Activated CD4-positive, alpha-beta T cell treated with anti-CD3 and anti-CD28 coated beads for 36 hours (primary cell): ENCODE measurements at regions of chr13 and their contacts with region 1.

Region 1: DNA sequence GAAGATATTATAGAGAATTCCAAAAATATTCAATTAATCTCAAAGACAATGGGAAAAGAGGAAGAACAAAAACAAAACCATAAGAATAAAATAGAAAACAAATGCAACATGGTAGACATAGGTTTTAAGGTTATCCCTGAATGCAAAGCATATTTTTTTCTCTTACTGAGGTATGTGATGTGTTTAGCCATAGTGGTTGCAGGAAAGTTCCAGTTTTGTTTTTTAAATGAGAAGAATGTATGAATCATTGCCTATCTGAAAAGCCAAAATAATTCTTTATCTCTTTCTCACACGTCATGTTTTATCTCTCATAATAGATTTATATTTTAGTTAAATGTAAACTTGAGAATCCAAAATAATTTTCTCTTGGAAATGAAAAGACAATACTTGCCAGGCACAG is 2591.7 kb upstream of the PCDH20 start:
- DNase-seq: no peak
- ATAC-seq: no peak
- H3K4me3 Mint-ChIP-seq: no peak overlapping the region
- H3K27ac Mint-ChIP-seq: no peak overlapping the region
- H3K4me1 Mint-ChIP-seq: no peaks in the 10 kb centered on the region
- H3K27me3 Mint-ChIP-seq: no peaks in the 10 kb centered on the region

Region 2: GRCh38 chr13:63092456-63092855 is 914.9 kb before region 1 on chr13:
- CTCF ChIA-PET with region 1: no interaction called
- POLR2A ChIA-PET with region 1: no interaction called
- intact Hi-C with region 1: no loop called
- DNase-seq: no peak
- ATAC-seq: no peak
- H3K4me3 Mint-ChIP-seq: no peak overlapping the region
- H3K27ac Mint-ChIP-seq: no peak overlapping the region
- H3K4me1 Mint-ChIP-seq: no peaks in the 10 kb centered on the region
- H3K27me3 Mint-ChIP-seq: no peaks in the 10 kb centered on the region

Region 3: DNA sequence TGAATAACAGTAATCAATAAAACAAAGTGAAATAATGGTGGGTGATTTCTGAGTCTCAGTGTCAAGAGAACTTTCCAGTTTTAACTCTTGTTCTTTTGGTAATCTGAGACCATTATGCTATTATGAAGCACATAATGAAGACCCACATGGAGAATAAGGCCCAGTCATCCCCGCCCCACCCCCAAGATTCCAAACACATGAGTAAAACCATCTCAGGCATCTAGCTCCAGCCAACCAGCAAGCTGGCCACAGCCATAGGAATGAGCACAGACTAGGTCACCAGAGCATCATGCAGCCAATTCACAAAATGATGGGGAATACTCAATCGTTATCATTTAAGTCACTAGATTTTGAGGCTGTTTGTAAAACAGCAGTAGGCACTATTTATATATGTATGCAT is 822.6 kb before region 1 on chr13:
- CTCF ChIA-PET with region 1: no interaction called
- POLR2A ChIA-PET with region 1: no interaction called
- intact Hi-C with region 1: no loop called
- DNase-seq: no peak
- ATAC-seq: no peak
- H3K4me3 Mint-ChIP-seq: no peak overlapping the region
- H3K27ac Mint-ChIP-seq: no peak overlapping the region
- H3K4me1 Mint-ChIP-seq: no peaks in the 10 kb centered on the region
- H3K27me3 Mint-ChIP-seq: no peaks in the 10 kb centered on the region

Region 4: DNA sequence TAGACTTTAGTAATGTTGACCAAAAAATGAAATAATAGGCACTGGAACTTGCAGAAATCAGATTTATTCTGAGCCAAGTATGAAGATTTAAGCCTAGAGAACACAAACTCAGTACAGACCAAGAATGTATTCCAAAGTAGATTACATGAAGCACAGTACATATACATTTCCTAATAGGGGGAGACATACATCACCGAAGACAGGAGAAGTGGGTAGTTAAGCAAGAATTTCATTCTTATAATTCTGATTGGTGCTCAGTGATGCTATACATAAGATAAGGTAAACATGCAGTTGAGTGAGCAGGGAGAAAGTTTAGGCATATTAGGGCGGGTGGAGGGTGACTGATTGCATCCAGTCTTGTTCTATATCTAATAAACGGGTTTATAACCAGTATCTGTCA is 1004.0 kb after region 1 on chr13:
- CTCF ChIA-PET with region 1: no interaction called
- POLR2A ChIA-PET with region 1: no interaction called
- intact Hi-C with region 1: loop called in 1 of 2 experiments (anchors 5 kb)
- DNase-seq: no peak
- ATAC-seq: no peak
- H3K4me3 Mint-ChIP-seq: no peak overlapping the region
- H3K27ac Mint-ChIP-seq: no peak overlapping the region
- H3K4me1 Mint-ChIP-seq: no peaks in the 10 kb centered on the region
- H3K27me3 Mint-ChIP-seq: no peaks in the 10 kb centered on the region